Activated CD8-positive, alpha-beta T cell treated with anti-CD3 and anti-CD28 coated beads for 36 hours (primary cell): ENCODE measurements at regions of chr10 and their contacts with region 1.

Region 1: GRCh38 chr10:15571575-15571974 is 148.1 kb downstream of the ITGA8 start:
- DNase-seq: no peak
- ATAC-seq: no peak
- H3K4me3 Mint-ChIP-seq: no peak overlapping the region
- H3K27ac Mint-ChIP-seq: no peak overlapping the region
- H3K4me1 Mint-ChIP-seq: no peaks in the 10 kb centered on the region
- H3K27me3 Mint-ChIP-seq: no peaks in the 10 kb centered on the region
- CTCF ChIP-seq: no peak

Region 2: DNA sequence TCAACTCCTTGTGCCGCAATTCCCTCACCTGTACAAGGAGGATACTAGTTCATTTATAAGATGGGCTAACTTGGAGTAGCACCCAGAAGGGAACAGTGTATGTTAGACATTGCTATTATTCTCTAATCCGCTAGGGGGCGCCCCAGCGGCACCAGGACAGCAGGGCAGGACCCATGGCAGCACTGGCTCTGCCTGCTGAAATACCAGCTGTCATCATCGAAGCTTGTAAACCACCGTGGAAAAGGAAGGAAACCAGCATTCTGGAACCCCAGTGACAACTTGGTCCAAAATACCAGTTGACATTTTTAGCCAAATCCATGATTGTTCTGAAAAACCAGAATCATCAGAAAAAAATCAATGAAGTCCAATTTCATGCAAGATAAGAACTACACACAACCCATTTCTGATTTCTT is 13.7 kb after region 1 on chr10:
- CTCF ChIA-PET with region 1: interaction called, 15 read pairs
- POLR2A ChIA-PET with region 1: no interaction called
- intact Hi-C with region 1: no loop called
- DNase-seq: peak; percentile 63
- ATAC-seq: peak; percentile 61
- H3K4me3 Mint-ChIP-seq: no peak overlapping the region
- H3K27ac Mint-ChIP-seq: no peak overlapping the region
- H3K4me1 Mint-ChIP-seq: no peaks in the 10 kb centered on the region
- H3K27me3 Mint-ChIP-seq: peaks cover 4% of the 10 kb centered on the region
- CTCF ChIP-seq: peak; percentile 50

Region 3: GRCh38 chr10:15751038-15751797 is 179.6 kb after region 1 on chr10:
- CTCF ChIA-PET with region 1: no interaction called
- POLR2A ChIA-PET with region 1: no interaction called
- intact Hi-C with region 1: no loop called
- DNase-seq: no peak
- ATAC-seq: no peak
- H3K4me3 Mint-ChIP-seq: no peak overlapping the region
- H3K27ac Mint-ChIP-seq: no peak overlapping the region
- H3K4me1 Mint-ChIP-seq: no peaks in the 10 kb centered on the region
- H3K27me3 Mint-ChIP-seq: peaks cover 20% of the 10 kb centered on the region
- CTCF ChIP-seq: no peak